ENCODE measurements at regions of chr1 and their contacts with region 1.

Region 1: DNA sequence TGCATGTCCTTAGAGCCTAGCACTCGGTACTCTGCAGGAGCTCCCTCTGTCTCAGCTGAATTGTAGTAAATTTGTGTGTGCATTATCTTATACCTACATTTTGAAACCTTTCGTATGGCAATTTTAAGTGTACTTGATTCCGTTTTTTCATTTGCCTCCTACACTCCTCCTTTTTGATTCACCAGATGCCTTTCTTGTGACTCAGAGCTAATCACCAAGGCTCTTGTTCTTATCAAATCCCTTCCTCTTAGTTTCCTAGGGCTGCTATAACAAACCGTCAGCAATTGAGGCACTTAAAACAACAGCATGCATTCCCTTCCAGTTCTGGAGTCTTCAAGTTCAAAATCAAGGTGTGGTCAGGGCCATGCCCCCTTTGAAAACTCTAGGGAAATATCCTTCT is 261.0 kb downstream of the ASTN1 start:
- DNase-seq: peak; percentile 37
- ATAC-seq: no peak
- H3K4me3 ChIP-seq: no peak overlapping the region
- H3K27ac ChIP-seq: no peak overlapping the region
- H3K4me1 ChIP-seq: no peaks in the 10 kb centered on the region
- H3K27me3 ChIP-seq: peaks cover 2% of the 10 kb centered on the region; the same call in 1 of the 2 replicates
- CTCF ChIP-seq: no peak
- POLR2A ChIP-seq: no peak
- RAD21 ChIP-seq: no peak

Region 2: GRCh38 chr1:175960169-175960568 is 943.3 kb before region 1 on chr1:
- CTCF ChIA-PET with region 1: no interaction called
- POLR2A ChIA-PET with region 1: no interaction called
- dilution Hi-C with region 1: no loop called
- in situ Hi-C with region 1: no loop called
- intact Hi-C with region 1: no loop called
- DNase-seq: no peak
- ATAC-seq: no peak
- H3K4me3 ChIP-seq: no peak overlapping the region
- H3K27ac ChIP-seq: no peak overlapping the region
- H3K4me1 ChIP-seq: no peaks in the 10 kb centered on the region
- H3K27me3 ChIP-seq: no peaks in the 10 kb centered on the region
- CTCF ChIP-seq: no peak
- POLR2A ChIP-seq: no peak
- RAD21 ChIP-seq: no peak

Region 3: GRCh38 chr1:176987016-176987415 is 83.5 kb after region 1 on chr1:
- CTCF ChIA-PET with region 1: no interaction called
- POLR2A ChIA-PET with region 1: no interaction called
- dilution Hi-C with region 1: no loop called
- in situ Hi-C with region 1: no loop called
- intact Hi-C with region 1: no loop called
- DNase-seq: peak; percentile 1
- ATAC-seq: no peak
- H3K4me3 ChIP-seq: no peak overlapping the region
- H3K27ac ChIP-seq: no peak overlapping the region
- H3K4me1 ChIP-seq: no peaks in the 10 kb centered on the region
- H3K27me3 ChIP-seq: no peaks in the 10 kb centered on the region
- CTCF ChIP-seq: no peak
- POLR2A ChIP-seq: no peak
- RAD21 ChIP-seq: no peak

Region 4: DNA sequence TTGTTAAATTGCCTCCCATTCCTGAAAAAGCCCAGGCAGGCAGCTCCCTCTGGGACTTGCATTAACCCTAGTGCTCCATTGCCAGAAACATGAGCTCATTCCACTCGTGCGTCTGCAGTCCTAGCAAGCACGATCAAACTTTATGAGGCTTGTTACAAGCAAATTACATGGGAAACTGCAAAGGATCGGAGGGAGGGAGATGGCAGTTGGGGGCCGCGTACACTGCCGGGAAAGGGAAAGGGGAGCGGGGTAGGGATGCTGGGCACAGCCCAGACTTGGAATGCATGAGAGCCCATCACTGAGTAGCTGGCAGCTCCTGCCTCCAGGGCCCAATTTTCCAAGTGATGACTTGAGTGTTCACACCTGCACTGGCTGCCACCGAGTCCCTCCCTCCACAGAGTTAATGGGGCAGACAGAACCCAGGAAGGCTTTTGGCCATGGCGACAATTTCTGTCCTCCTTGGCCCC is 437.2 kb after region 1 on chr1:
- CTCF ChIA-PET with region 1: no interaction called
- POLR2A ChIA-PET with region 1: no interaction called
- dilution Hi-C with region 1: no loop called
- in situ Hi-C with region 1: loop called (anchors 10 kb)
- intact Hi-C with region 1: no loop called
- DNase-seq: no peak
- ATAC-seq: no peak
- H3K4me3 ChIP-seq: no peak overlapping the region
- H3K27ac ChIP-seq: no peak overlapping the region
- H3K4me1 ChIP-seq: no peaks in the 10 kb centered on the region
- H3K27me3 ChIP-seq: no peaks in the 10 kb centered on the region
- CTCF ChIP-seq: no peak
- POLR2A ChIP-seq: no peak
- RAD21 ChIP-seq: no peak

Measured in IMR-90 (cell line).